ENCODE measurements at regions of chr12 and their contacts with region 1.

Region 1: DNA sequence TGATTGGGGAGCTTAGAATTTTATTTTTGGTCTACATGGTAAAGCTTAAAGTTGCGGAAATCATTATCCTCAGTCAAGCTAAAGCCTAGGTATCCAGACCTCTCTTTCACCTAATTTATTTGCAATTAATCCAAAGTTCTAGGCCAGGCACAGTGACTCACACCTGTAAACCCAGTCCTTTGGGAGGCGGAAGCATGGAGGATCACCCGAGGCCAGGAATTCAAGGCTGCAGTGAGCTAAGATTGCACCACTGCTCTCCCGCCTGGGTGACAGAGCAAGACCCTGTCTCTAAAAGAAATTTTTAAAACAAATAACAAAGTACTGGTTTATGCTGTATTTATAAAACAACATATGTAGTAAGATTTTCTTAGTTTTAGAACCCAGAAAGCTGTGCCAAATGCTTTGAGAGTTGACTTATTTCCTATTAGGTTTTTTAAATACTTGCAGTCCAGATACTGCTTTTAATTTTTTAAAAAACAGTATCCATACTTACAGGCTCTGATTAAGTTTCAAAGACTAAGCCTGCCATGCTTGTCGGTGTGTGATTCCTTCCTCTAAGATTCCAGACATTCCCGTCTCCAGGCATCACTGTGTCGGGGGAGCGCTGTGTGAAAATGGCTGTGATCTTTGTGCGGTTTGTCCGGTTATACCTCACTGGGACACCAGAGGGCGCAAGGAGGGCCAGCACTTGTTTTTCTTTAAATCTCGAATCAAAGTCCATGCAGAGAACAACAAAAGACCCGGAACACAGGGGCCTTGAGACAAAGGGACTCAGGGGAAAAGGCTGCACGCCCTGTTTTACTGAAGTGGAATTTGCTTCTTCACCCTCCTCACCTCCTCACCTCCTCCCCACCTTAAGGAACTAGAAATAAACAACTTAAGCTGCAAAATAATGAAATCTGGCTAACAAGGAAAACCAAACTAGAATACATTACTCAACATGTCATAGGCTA is 24.6 kb upstream of the TMPO start:
- DNase-seq: peak; percentile 96
- H3K4me3 ChIP-seq: no peak overlapping the region
- H3K27ac ChIP-seq: peak overlapping the region; percentile 45
- H3K4me1 ChIP-seq: peaks cover 4% of the 10 kb centered on the region
- H3K27me3 ChIP-seq: no peaks in the 10 kb centered on the region
- CTCF ChIP-seq: peak; percentile 83 to 89
- POLR2A ChIP-seq: no peak

Region 2: DNA sequence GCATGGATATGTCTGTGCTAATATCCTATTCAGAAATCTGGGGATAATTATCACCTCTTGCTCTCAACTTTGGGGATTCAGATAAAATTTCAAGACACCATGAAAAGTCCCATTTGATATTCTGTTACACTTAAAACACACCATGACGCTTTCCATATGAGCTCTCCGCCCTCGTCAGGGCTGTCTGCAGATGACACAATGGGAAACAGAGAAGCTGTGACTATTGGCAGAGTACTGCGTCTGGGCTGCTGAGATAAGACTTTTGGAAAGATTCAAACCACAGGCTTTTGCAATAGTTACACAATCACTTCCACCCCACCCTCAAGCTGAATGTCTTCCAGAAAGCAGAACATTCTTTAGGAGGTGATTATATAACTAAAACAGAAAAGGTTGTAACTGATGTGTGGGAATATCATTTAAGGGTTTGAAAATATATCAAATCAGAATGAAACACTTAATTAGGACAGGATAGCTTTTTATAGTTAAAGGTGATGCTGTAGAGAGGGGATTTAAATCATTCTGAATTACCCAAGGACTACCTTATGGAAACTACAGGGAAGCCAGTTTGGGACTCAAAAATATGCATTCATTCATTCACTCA is 50.7 kb before region 1 on chr12:
- CTCF ChIA-PET with region 1: interaction called, 12 read pairs
- POLR2A ChIA-PET with region 1: no interaction called
- dilution Hi-C with region 1: no loop called
- intact Hi-C with region 1: loop called (anchors 1 kb)
- DNase-seq: peak; percentile 95
- H3K4me3 ChIP-seq: peak overlapping the region in 1 of 3 experiments; percentile 21
- H3K27ac ChIP-seq: peak overlapping the region; percentile 88
- H3K4me1 ChIP-seq: peaks cover 18% of the 10 kb centered on the region
- H3K27me3 ChIP-seq: no peaks in the 10 kb centered on the region
- CTCF ChIP-seq: no peak
- POLR2A ChIP-seq: no peak

Region 3: DNA sequence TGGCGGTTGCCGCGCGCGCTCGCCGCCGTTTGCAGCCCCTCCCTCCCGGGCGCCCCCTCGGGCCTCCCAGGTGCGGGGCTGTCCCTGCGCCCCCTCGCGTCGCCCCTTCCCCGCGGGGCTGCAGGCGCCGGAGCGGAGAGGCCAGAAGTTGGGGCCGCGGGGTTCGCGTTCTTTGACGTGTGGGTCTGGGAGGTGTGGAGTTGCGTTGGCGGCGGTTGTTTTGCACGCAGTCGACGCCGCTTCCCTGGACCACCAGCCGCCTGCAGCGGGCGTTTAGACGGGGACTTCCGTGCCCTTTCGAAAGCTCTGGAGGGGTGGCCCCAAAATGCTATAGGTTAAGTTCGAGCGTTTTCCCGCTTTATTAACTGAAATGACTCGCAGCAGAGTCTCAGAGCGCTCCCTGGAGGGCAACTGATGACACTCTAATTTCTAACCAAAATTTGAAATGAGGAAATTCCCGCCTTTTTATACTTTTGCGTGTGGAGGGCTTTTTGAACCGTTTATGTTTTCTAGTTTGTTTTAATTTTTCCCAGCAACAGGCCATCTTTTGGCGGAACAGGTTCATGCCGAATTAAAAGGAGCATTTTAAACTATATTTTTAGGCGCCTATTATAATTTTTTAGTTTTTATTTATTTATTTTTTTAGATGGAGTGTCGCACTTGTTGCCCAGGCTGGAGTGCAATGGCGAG is 25.6 kb after region 1 on chr12:
- CTCF ChIA-PET with region 1: interaction called, 63 read pairs
- POLR2A ChIA-PET with region 1: no interaction called
- dilution Hi-C with region 1: no loop called
- intact Hi-C with region 1: loop called (anchors 1 kb)
- DNase-seq: peak; percentile 78
- H3K4me3 ChIP-seq: peak overlapping the region; percentile 60 to 99 (median 97)
- H3K27ac ChIP-seq: peak overlapping the region; percentile 85
- H3K4me1 ChIP-seq: peaks cover 16% of the 10 kb centered on the region
- H3K27me3 ChIP-seq: no peaks in the 10 kb centered on the region
- CTCF ChIP-seq: peak; percentile 58 to 61
- POLR2A ChIP-seq: no peak

Region 4: DNA sequence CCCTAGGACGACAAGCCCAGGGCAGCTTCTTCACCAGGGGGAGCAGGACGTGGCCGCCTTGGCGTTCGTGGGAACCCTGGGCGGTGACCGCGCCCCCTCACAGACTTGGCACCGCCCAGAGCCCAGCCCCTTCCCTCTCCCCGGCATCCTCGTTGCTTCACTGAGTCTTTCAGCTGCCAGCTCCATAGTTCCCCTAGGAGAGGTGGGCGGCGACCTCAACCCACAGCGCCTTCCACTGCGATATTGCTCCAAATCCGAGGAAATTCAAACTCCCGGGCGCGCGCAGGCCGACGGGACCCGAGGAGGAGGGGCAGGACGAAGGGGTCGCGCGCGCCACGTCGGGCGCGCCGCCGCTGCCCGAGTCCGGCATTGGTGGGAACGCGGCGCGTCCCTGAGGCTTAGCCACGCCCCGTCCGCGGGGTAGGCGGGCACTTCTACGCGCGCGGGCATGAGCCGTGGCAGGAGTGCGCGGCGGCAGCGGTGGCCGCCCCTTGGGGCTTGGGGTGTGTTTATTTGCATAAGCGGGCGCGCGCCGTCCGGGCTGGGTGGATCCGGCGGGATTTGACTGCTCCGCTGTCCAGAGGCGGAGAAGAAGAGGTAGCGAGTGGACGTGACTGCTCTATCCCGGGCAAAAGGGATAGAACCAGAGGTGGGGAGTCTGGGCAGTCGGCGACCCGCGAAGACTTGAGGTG is 154.1 kb after region 1 on chr12 and contains the starts of genes APAF1 and IKBIP:
- CTCF ChIA-PET with region 1: interaction called, 3 read pairs
- POLR2A ChIA-PET with region 1: no interaction called
- dilution Hi-C with region 1: no loop called
- intact Hi-C with region 1: loop called (anchors 2 kb)
- DNase-seq: peak; percentile 97
- H3K4me3 ChIP-seq: peak within 1 kb of the TSS; percentile 67 to 92 (median 87)
- H3K27ac ChIP-seq: peak within 1 kb of the TSS; percentile 67
- H3K4me1 ChIP-seq: peaks cover 11% of the 10 kb centered on the region
- H3K27me3 ChIP-seq: no peaks in the 10 kb centered on the region
- CTCF ChIP-seq: no peak
- POLR2A ChIP-seq: peak; percentile 65
- total RNA-seq, gene APAF1: 32.1 and 35.2 TPM in 2 replicates
- total RNA-seq, gene IKBIP: 56.2 and 56.8 TPM in 2 replicates

Region 5: GRCh38 chr12:98998697-98999299 is 508.0 kb after region 1 on chr12:
- CTCF ChIA-PET with region 1: interaction called, 9 read pairs
- POLR2A ChIA-PET with region 1: no interaction called
- dilution Hi-C with region 1: no loop called
- intact Hi-C with region 1: loop called (anchors 1 kb)
- DNase-seq: peak; percentile 49
- H3K4me3 ChIP-seq: no peak overlapping the region
- H3K27ac ChIP-seq: no peak overlapping the region
- H3K4me1 ChIP-seq: no peaks in the 10 kb centered on the region
- H3K27me3 ChIP-seq: peaks cover 0 to 2% of the 10 kb centered on the region in 2 experiments
- CTCF ChIP-seq: peak; percentile 37 to 45
- POLR2A ChIP-seq: no peak